Caco-2 (cell line): ENCODE measurements at regions of chr4 and their contacts with region 1.

Region 1: GRCh38 chr4:181528570-181529184 is 714.5 kb upstream of the TENM3 start:
- DNase-seq: peak; percentile 78 to 83
- H3K4me3 ChIP-seq: no peak overlapping the region
- H3K4me3 Mint-ChIP-seq: no peak overlapping the region
- H3K27ac Mint-ChIP-seq: no peak overlapping the region
- H3K4me1 ChIP-seq: no peaks in the 10 kb centered on the region
- H3K4me1 Mint-ChIP-seq: no peaks in the 10 kb centered on the region
- H3K27me3 ChIP-seq: no peaks in the 10 kb centered on the region
- H3K27me3 Mint-ChIP-seq: peaks cover 13% of the 10 kb centered on the region
- CTCF ChIP-seq: peak; percentile 83 to 89

Region 2: GRCh38 chr4:180664766-180665368 is 863.8 kb before region 1 on chr4:
- CTCF ChIA-PET with region 1: no interaction called
- POLR2A ChIA-PET with region 1: no interaction called
- intact Hi-C with region 1: loop called (anchors 1 kb)
- DNase-seq: peak; percentile 66 to 67
- H3K4me3 ChIP-seq: no peak overlapping the region
- H3K4me3 Mint-ChIP-seq: no peak overlapping the region
- H3K27ac Mint-ChIP-seq: no peak overlapping the region
- H3K4me1 ChIP-seq: no peaks in the 10 kb centered on the region
- H3K4me1 Mint-ChIP-seq: no peaks in the 10 kb centered on the region
- H3K27me3 ChIP-seq: no peaks in the 10 kb centered on the region
- H3K27me3 Mint-ChIP-seq: no peaks in the 10 kb centered on the region
- CTCF ChIP-seq: peak; percentile 50 to 62

Region 3: GRCh38 chr4:180828440-180829018 is 700.1 kb before region 1 on chr4:
- CTCF ChIA-PET with region 1: interaction called, 3 read pairs
- POLR2A ChIA-PET with region 1: no interaction called
- intact Hi-C with region 1: loop called (anchors 1 kb)
- DNase-seq: peak in 1 of 2 experiments; percentile 17
- H3K4me3 ChIP-seq: no peak overlapping the region
- H3K4me3 Mint-ChIP-seq: no peak overlapping the region
- H3K27ac Mint-ChIP-seq: no peak overlapping the region
- H3K4me1 ChIP-seq: no peaks in the 10 kb centered on the region
- H3K4me1 Mint-ChIP-seq: no peaks in the 10 kb centered on the region
- H3K27me3 ChIP-seq: no peaks in the 10 kb centered on the region
- H3K27me3 Mint-ChIP-seq: peaks cover 9% of the 10 kb centered on the region
- CTCF ChIP-seq: peak; percentile 51 to 54

Region 4: GRCh38 chr4:181143250-181143854 is 385.3 kb before region 1 on chr4:
- CTCF ChIA-PET with region 1: no interaction called
- POLR2A ChIA-PET with region 1: no interaction called
- intact Hi-C with region 1: loop called (anchors 1 kb)
- DNase-seq: peak in 1 of 2 experiments; percentile 49
- H3K4me3 ChIP-seq: no peak overlapping the region
- H3K4me3 Mint-ChIP-seq: no peak overlapping the region
- H3K27ac Mint-ChIP-seq: no peak overlapping the region
- H3K4me1 ChIP-seq: no peaks in the 10 kb centered on the region
- H3K4me1 Mint-ChIP-seq: no peaks in the 10 kb centered on the region
- H3K27me3 ChIP-seq: no peaks in the 10 kb centered on the region
- H3K27me3 Mint-ChIP-seq: peaks cover 3% of the 10 kb centered on the region
- CTCF ChIP-seq: peak; percentile 32 to 51

Region 5: GRCh38 chr4:181148470-181148869 is 380.2 kb before region 1 on chr4:
- CTCF ChIA-PET with region 1: no interaction called
- POLR2A ChIA-PET with region 1: no interaction called
- intact Hi-C with region 1: loop called (anchors 1 kb)
- DNase-seq: no peak
- H3K4me3 ChIP-seq: no peak overlapping the region
- H3K4me3 Mint-ChIP-seq: no peak overlapping the region
- H3K27ac Mint-ChIP-seq: no peak overlapping the region
- H3K4me1 ChIP-seq: no peaks in the 10 kb centered on the region
- H3K4me1 Mint-ChIP-seq: no peaks in the 10 kb centered on the region
- H3K27me3 ChIP-seq: no peaks in the 10 kb centered on the region
- H3K27me3 Mint-ChIP-seq: peaks cover 3% of the 10 kb centered on the region
- CTCF ChIP-seq: no peak

Region 6: DNA sequence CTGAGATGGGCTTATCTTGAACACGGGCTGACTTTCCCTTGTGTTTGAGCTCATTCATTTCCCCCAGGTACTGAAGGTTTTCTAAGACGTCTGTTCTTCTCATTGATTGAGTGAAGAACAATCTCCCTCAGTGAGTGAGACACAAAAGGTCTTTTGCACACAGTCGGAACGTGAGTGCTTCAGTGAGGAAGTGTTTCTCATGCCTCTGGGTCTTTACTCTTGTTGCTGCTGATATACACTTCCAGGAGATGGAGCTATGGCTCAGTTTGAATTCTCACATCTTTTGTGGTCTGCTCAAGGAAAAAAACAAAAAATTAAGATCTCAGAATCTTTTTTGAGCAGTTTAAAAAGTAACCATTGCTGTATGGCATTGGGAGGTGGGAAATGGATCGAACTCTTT is 267.4 kb before region 1 on chr4:
- CTCF ChIA-PET with region 1: no interaction called
- POLR2A ChIA-PET with region 1: no interaction called
- intact Hi-C with region 1: loop called (anchors 1 kb)
- DNase-seq: no peak
- H3K4me3 ChIP-seq: no peak overlapping the region
- H3K4me3 Mint-ChIP-seq: no peak overlapping the region
- H3K27ac Mint-ChIP-seq: no peak overlapping the region
- H3K4me1 ChIP-seq: no peaks in the 10 kb centered on the region
- H3K4me1 Mint-ChIP-seq: no peaks in the 10 kb centered on the region
- H3K27me3 ChIP-seq: no peaks in the 10 kb centered on the region
- H3K27me3 Mint-ChIP-seq: peaks cover 8% of the 10 kb centered on the region
- CTCF ChIP-seq: no peak

Region 7: GRCh38 chr4:181301735-181302710 is 226.7 kb before region 1 on chr4:
- CTCF ChIA-PET with region 1: interaction called, 5 read pairs
- POLR2A ChIA-PET with region 1: no interaction called
- intact Hi-C with region 1: loop called (anchors 1 kb)
- DNase-seq: peak; percentile 47 to 67
- H3K4me3 ChIP-seq: no peak overlapping the region
- H3K4me3 Mint-ChIP-seq: no peak overlapping the region
- H3K27ac Mint-ChIP-seq: no peak overlapping the region
- H3K4me1 ChIP-seq: no peaks in the 10 kb centered on the region
- H3K4me1 Mint-ChIP-seq: no peaks in the 10 kb centered on the region
- H3K27me3 ChIP-seq: no peaks in the 10 kb centered on the region
- H3K27me3 Mint-ChIP-seq: no peaks in the 10 kb centered on the region
- CTCF ChIP-seq: peak; percentile 73 to 81

Region 8: GRCh38 chr4:181468451-181468850 is 60.2 kb before region 1 on chr4:
- CTCF ChIA-PET with region 1: no interaction called
- POLR2A ChIA-PET with region 1: no interaction called
- intact Hi-C with region 1: no loop called
- DNase-seq: no peak
- H3K4me3 ChIP-seq: no peak overlapping the region
- H3K4me3 Mint-ChIP-seq: no peak overlapping the region
- H3K27ac Mint-ChIP-seq: no peak overlapping the region
- H3K4me1 ChIP-seq: no peaks in the 10 kb centered on the region
- H3K4me1 Mint-ChIP-seq: no peaks in the 10 kb centered on the region
- H3K27me3 ChIP-seq: no peaks in the 10 kb centered on the region
- H3K27me3 Mint-ChIP-seq: no peaks in the 10 kb centered on the region
- CTCF ChIP-seq: no peak